Breast epithelium (tissue), 4 donors: ENCODE measurements at regions of chr11 and their contacts with region 1.

Region 1: DNA sequence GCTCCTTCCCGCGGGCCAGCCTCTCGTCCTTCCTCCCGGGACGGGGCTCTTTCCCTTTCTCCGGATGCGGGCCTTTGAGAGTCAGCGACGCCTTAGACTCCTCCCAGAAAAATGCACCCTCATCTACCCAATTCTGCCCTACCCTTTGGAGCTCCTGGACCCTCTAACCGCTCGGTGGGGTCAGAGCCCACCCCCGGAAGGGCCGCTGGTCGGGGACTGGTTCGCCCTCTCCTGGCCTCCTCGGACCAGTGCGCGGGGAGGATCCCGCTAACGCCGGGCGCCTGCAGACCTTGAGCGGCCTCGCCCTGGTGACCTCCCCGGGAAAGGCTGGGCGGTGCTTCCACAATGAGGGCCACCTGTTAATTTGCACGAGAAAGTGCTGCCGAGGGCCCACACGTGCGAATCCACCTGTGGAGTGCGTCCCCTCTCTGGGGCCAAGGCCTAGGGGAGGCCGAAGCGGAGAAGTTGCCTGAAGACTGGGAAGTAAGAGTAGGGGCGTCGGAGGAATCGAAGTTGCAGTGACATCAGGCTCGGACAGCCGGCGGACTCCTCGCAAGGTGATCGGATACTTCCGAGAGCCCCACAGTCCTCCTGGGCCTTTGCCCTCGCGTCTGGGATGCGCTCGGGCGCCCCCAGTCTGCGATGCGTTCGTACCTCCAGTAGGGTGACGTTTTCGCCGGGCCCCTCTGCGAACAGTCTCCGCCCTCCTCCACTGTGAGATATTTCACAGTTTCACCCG is 61.5 kb downstream of the ENDOD1 start:
- DNase-seq: peak; percentile 88 to 93
- H3K4me3 ChIP-seq: peak overlapping the region; percentile 58 to 73 (median 66)
- H3K27ac ChIP-seq: peak overlapping the region; percentile 98 to 99
- H3K4me1 ChIP-seq: peaks cover 3 to 9% of the 10 kb centered on the region in 2 donors
- H3K27me3 ChIP-seq: no peaks in the 10 kb centered on the region
- CTCF ChIP-seq: peak; percentile 91 to 98 (median 98)
- POLR2A ChIP-seq: peak; percentile 76

Region 2: GRCh38 chr11:95068549-95068948 is 82.6 kb before region 1 on chr11:
- intact Hi-C with region 1: loop called (anchors 2 kb)
- DNase-seq: peak; percentile 78 to 88
- H3K4me3 ChIP-seq: peak overlapping the region; percentile 88 to 92 (median 89)
- H3K27ac ChIP-seq: peak overlapping the region; percentile 98 to 99
- H3K4me1 ChIP-seq: peaks cover 0 to 3% of the 10 kb centered on the region in 2 donors
- H3K27me3 ChIP-seq: no peaks in the 10 kb centered on the region
- CTCF ChIP-seq: no peak
- POLR2A ChIP-seq: peak; percentile 91

Region 3: GRCh38 chr11:95705485-95706124 is 554.5 kb after region 1 on chr11:
- intact Hi-C with region 1: loop called (anchors 10 kb)
- DNase-seq: peak; percentile 85 to 88
- H3K4me3 ChIP-seq: no peak overlapping the region
- H3K27ac ChIP-seq: peak overlapping the region; percentile 27 to 58
- H3K4me1 ChIP-seq: peaks cover 0 to 8% of the 10 kb centered on the region in 2 donors
- H3K27me3 ChIP-seq: no peaks in the 10 kb centered on the region
- CTCF ChIP-seq: peak; percentile 80 to 95 (median 91)
- POLR2A ChIP-seq: no peak

Region 4: DNA sequence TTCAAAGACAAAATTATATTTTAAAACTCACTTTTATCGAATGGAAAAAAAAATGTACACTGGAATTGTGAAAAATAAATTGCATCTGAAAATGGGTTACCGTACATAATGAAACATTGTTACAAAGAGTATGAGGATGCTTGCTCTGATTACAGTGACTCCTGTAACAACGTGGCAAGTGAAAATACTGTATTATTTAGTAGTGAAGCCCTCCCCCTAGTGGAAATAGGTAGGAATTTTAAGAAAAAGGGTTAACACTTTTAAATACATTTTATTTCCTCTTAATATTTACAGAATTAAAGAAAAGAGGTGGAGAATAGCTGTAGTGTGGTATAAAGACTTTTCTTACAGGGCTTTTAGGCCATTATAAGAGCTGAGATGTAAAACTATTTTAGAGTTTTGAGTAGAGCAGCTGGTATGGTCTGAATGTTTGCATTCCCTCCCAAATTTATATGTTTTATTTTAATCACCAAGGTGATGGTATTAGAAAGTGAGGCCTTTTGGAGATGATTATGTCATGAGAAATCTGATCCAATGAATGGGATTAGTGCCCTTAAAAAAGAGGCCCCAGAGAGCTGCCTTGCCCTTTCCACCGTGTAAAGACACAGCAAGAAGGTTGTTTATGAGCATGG is 613.3 kb after region 1 on chr11:
- intact Hi-C with region 1: loop called (anchors 10 kb)
- DNase-seq: no peak
- H3K4me3 ChIP-seq: no peak overlapping the region
- H3K27ac ChIP-seq: no peak overlapping the region
- H3K4me1 ChIP-seq: no peaks in the 10 kb centered on the region
- H3K27me3 ChIP-seq: no peaks in the 10 kb centered on the region
- CTCF ChIP-seq: peak; percentile 82 to 88 (median 84)
- POLR2A ChIP-seq: no peak

Region 5: DNA sequence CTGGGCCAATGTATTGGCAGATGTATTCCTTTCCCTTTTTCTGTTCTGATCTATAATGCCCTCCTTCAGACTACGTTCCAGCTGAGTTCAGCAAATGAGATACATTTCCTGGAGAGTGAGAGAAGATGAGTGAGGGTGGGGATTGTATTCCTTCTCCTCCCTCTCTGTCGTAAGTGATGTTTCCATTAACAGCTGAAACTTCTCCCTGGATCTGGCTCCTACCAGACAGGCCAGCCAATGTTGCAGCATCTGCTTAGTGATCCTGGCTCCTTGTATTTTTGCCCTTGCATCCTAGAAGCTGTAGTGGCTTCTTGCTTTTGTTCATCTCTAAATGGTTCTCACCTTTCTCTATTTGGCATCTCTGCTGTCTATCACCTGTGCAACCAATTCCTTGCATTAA is 820.9 kb after region 1 on chr11:
- intact Hi-C with region 1: loop called (anchors 5 kb)
- DNase-seq: no peak
- H3K4me3 ChIP-seq: no peak overlapping the region
- H3K27ac ChIP-seq: no peak overlapping the region
- H3K4me1 ChIP-seq: no peaks in the 10 kb centered on the region
- H3K27me3 ChIP-seq: no peaks in the 10 kb centered on the region
- CTCF ChIP-seq: no peak
- POLR2A ChIP-seq: no peak